Activated CD4-positive, alpha-beta T cell treated with anti-CD3 and anti-CD28 coated beads for 36 hours (primary cell): ENCODE measurements at regions of chr9 and their contacts with region 1.

Region 1: GRCh38 chr9:100598641-100599145 is 20.8 kb downstream of the CAVIN4 start:
- DNase-seq: peak; percentile 87
- ATAC-seq: peak; percentile 87
- H3K4me3 Mint-ChIP-seq: peak overlapping the region; percentile 59
- H3K27ac Mint-ChIP-seq: peak overlapping the region; percentile 45
- H3K4me1 Mint-ChIP-seq: peaks cover 20% of the 10 kb centered on the region
- H3K27me3 Mint-ChIP-seq: no peaks in the 10 kb centered on the region

Region 2: DNA sequence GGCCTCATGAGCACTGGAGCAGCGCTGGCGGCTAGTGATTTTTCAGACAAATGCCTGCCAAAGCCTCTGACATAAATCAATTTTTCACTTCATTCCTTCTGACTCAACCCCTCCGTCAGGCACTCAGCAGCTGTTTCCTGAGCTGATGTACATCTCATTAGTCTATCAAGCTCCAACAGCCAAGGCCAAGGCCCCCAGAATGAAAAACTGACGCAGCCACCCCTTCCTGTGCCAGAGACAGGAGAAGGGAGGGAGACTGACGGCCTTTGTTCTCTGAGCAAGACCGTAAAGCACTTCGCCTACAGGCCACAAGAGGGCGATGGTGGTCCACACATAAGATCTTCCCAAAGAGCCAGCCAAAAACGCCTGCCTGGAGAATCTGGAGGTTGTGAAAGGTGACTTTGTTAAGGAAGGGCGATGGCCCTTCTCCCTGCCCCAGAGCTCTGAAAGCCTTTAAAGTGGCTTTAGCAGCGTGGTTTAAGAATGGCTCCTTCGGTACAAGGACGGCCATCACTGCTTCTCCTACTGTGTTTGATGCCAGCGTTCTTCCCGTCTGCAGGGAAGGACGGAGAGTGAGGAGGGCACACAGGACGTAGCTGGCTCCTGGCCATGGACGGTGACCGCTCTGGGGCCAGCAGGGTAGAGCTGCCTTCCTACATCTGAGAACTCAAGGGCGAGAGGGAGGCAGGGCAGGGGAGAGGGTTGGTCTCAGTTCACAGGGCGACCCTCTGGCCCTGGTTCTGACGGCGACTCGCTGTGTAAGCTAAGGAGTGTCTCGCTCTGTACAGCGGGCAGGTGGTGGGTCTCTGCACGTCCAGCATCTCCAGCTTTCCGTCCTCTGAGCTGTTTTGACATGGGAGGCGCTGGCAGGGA is 1414.0 kb before region 1 on chr9:
- CTCF ChIA-PET with region 1: interaction called, 3 read pairs
- POLR2A ChIA-PET with region 1: no interaction called
- intact Hi-C with region 1: loop called (anchors 5 kb)
- DNase-seq: peak; percentile 88
- ATAC-seq: peak; percentile 89
- H3K4me3 Mint-ChIP-seq: no peak overlapping the region
- H3K27ac Mint-ChIP-seq: peak overlapping the region; percentile 33
- H3K4me1 Mint-ChIP-seq: peaks cover 42% of the 10 kb centered on the region
- H3K27me3 Mint-ChIP-seq: peaks cover 6% of the 10 kb centered on the region

Region 3: DNA sequence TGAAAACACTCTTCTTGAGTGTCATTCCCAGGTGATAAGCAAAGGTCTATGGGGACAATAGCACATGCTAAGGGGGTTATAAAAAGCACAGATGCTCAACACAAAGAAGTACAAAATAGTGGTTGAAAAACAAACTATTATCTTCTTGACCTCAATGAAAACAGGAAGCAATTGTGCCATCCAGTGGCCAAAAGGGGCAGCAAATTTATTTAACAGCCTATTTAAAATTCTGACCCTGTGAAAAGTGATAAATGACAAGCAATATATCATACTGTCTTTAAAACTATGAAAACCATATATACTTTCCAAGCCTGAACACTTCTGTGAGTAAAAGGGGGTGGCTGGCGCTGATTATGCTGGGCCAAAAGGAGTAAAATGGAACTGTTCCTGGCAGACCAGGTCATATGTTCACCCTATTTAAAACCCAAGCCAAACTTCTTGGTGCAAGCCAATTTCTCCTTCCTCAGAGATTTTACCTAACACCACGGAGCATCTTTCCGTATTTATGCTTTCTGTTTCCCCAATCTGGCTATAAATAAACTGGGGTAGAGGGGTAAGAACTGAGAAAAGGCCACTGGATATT is 275.6 kb before region 1 on chr9:
- CTCF ChIA-PET with region 1: interaction called, 7 read pairs
- POLR2A ChIA-PET with region 1: no interaction called
- intact Hi-C with region 1: loop called (anchors 2 to 10 kb)
- DNase-seq: peak; percentile 49
- ATAC-seq: no peak
- H3K4me3 Mint-ChIP-seq: no peak overlapping the region
- H3K27ac Mint-ChIP-seq: no peak overlapping the region
- H3K4me1 Mint-ChIP-seq: peaks cover 13% of the 10 kb centered on the region
- H3K27me3 Mint-ChIP-seq: no peaks in the 10 kb centered on the region

Region 4: DNA sequence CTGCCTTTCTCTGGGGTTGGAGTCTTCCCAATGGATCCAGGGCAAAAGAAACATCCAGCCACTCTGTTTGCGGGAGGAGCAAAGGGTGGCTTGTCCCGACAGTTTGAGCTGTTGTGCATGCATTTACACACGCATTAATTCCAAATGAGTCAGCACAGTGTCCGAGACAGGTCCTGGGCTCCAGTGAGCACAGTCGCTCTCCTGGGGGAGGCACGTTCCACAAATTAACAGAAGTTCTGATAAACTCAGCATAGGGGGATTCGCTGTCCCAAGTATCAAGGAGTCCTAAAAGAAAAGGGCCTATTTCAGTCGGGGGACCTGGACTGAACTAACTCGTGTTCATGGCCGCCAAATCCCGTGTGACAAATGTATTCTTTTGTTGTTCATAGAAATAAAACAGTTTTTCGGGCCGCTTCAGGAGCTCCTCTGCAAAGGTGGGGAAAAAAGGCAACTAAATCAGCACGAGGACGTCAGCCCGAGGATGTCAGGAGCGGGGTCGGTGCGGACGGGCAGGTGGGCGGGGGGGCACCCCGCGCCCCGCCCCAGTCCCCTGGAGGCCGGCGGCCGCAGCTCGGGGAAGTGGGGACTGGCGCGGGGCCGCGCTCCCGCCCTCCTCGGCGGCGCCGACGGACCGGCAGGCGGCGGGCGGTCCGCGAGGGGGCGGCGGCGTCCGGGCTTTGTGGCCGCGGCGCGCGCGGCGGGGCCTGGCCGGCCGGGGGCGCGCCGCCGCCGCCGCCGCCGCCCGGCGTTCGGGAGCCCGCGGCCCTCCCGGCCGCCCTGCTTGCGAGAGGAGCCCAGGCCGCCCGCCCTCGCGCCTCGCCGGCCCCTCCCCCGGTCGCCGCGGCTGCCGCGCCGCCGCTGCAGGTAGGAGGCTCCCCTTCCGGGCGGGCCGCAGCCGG is 171.9 kb before region 1 on chr9 and contains the start of gene MSANTD3:
- CTCF ChIA-PET with region 1: interaction called, 3 read pairs
- POLR2A ChIA-PET with region 1: no interaction called
- intact Hi-C with region 1: loop called (anchors 5 kb)
- DNase-seq: peak; percentile 71
- ATAC-seq: peak; percentile 74
- H3K4me3 Mint-ChIP-seq: peak within 1 kb of the TSS; percentile 81
- H3K27ac Mint-ChIP-seq: peak within 1 kb of the TSS; percentile 91
- H3K4me1 Mint-ChIP-seq: peaks cover 30% of the 10 kb centered on the region
- H3K27me3 Mint-ChIP-seq: no peaks in the 10 kb centered on the region
- total RNA-seq, gene MSANTD3: 17.9 to 21.6 TPM

Region 5: DNA sequence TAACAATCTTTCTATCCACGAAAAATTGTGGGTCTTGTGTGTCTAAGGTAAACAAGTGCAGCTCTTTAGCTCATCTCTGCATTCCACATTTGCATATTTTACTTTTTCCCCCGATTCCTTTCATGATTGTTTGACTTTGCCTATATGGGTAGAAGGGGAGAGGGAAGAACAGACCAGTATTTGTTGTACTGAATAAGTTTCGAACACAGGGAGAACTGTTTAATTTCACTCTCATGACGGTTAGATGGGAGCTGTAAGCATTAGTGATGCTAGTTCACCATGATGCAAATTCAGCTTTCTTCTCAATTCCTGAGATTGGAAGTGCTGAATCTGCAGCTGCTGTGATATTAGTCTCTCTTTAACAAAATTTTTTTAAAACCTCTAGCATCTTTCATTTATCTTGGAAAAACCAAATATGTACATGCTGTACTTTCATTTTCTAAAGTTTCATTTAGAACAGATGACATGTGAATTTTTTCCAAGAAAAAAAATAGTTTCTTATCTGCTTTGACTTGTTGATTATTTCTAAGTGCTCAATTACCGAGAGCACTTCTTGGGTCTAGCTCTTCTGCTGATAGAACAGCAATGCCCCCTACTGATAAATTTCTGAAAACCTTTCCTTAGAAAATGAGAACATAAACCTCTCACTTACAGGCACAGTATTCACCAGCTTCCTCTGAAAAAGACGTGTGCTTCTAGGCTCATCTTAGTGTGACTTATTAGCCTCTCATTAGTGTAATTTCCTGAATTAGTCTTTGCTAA is 636.6 kb after region 1 on chr9:
- CTCF ChIA-PET with region 1: interaction called, 3 read pairs
- POLR2A ChIA-PET with region 1: no interaction called
- intact Hi-C with region 1: loop called in 1 of 2 experiments (anchors 2 kb)
- DNase-seq: no peak
- ATAC-seq: no peak
- H3K4me3 Mint-ChIP-seq: no peak overlapping the region
- H3K27ac Mint-ChIP-seq: no peak overlapping the region
- H3K4me1 Mint-ChIP-seq: no peaks in the 10 kb centered on the region
- H3K27me3 Mint-ChIP-seq: peaks cover 2% of the 10 kb centered on the region

Region 6: GRCh38 chr9:101398068-101398929 is 799.6 kb after region 1 on chr9 and contains the starts of genes MRPL50 and ZNF189:
- CTCF ChIA-PET with region 1: no interaction called
- POLR2A ChIA-PET with region 1: no interaction called
- intact Hi-C with region 1: loop called in 1 of 2 experiments (anchors 2 kb)
- DNase-seq: peak; percentile 98
- ATAC-seq: peak; percentile 97
- H3K4me3 Mint-ChIP-seq: peak within 1 kb of the TSS; percentile 94
- H3K27ac Mint-ChIP-seq: peak within 1 kb of the TSS; percentile 100
- H3K4me1 Mint-ChIP-seq: peaks cover 67% of the 10 kb centered on the region
- H3K27me3 Mint-ChIP-seq: no peaks in the 10 kb centered on the region
- total RNA-seq, gene MRPL50: 15.5 to 17.0 TPM
- total RNA-seq, gene ZNF189: 10.2 to 13.1 TPM